Heart left ventricle (tissue), 16 donors: ENCODE measurements at regions of chr9 and their contacts with region 1.

Region 1: GRCh38 chr9:84823421-84824271 is 154.1 kb downstream of the NTRK2 start:
- DNase-seq: peak in 2 of 5 donors; percentile 10 to 18
- ATAC-seq: peak; percentile 55 to 70 (median 60)
- H3K4me3 ChIP-seq: peak overlapping the region in 1 of 12 donors; percentile 9
- H3K27ac ChIP-seq: peak overlapping the region in 2 of 12 donors; percentile 48 to 49
- H3K4me1 ChIP-seq: peaks cover 0 to 32% (median 2%) of the 10 kb centered on the region in 12 donors
- H3K27me3 ChIP-seq: no peaks in the 10 kb centered on the region
- CTCF ChIP-seq: no peak
- POLR2A ChIP-seq: no peak

Region 2: DNA sequence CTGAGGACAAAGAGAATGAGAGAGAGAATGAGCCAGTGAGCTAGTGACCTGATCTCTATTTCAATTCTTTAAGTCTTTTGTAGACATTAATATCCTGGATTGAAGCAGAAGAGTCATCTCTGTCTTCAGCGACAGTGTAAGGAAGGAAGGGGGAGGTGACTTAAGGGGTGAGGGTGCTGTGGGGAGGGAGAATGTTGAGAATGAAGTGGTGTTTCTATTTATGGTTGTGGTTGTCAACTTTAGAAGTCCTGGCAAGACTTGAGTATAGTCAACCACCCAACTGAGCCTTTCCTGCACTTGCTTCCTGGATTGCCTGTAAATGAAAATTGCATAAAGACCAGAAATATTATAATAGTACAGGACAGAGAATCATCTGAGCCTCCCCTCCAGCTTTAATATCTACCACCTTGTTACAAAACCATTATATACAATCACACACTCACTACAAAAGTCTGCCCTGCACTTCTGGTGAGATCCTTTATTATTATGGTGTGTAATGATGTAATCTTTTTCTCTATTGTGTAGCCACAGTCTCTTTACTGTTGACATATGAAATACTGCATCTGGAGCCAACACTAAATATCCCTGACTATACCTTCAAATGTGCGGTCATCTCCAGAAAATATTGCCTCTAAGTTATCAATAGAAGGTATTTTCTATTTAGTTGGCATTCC is 62.4 kb before region 1 on chr9:
- intact Hi-C with region 1: loop called in 1 of 10 experiments (anchors 5 kb)
- DNase-seq: no peak
- ATAC-seq: no peak
- H3K4me3 ChIP-seq: no peak overlapping the region
- H3K27ac ChIP-seq: no peak overlapping the region
- H3K4me1 ChIP-seq: peaks cover 0 to 11% (median 0%) of the 10 kb centered on the region in 12 donors
- H3K27me3 ChIP-seq: no peaks in the 10 kb centered on the region
- CTCF ChIP-seq: no peak
- POLR2A ChIP-seq: no peak

Region 3: DNA sequence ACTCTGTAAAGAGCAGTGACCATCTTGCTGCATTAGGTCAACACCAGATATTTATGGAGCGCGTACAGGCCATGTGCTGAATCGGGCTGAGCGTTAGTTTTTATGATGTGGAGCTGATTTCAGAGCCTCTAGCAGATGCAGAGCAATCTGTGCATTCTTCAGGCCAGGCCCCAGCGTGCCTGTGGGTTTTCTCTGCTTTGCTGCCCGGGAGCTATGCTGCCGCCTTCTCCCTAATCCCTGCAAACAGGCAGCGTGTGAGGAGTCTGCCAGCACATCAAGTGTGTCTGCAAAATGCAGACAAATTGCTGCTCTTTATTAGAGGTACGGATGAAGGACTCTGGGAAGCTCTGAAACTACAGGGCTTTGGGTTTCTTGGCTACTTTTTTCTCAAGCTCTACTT is 15.9 kb after region 1 on chr9:
- intact Hi-C with region 1: no loop called
- DNase-seq: no peak
- ATAC-seq: no peak
- H3K4me3 ChIP-seq: no peak overlapping the region
- H3K27ac ChIP-seq: no peak overlapping the region
- H3K4me1 ChIP-seq: no peaks in the 10 kb centered on the region
- H3K27me3 ChIP-seq: no peaks in the 10 kb centered on the region
- CTCF ChIP-seq: no peak
- POLR2A ChIP-seq: no peak

Region 4: DNA sequence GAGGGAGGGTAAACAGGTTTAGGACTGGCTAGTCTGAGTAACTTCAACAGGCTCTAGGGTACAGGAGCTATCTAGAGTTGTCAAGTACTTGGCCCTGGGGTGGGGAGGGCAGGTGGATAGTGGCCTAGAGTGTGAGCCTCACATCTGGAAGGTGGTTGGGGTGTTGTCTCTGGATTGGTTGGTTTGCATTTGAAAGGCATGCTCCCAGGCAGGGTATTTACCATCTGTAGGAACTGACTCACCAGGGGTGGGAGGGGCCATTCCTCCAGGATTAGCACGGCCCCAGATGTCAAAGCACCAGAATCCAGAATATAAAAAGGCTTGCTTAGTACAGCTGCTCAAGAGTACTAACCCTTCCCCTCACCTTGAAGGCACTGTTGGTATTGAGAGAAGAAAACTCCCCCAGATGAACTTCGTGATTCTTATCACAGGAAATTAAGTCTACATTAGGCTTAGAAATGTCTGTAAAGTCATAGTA is 39.2 kb after region 1 on chr9:
- intact Hi-C with region 1: loop called in 1 of 10 experiments (anchors 5 kb)
- DNase-seq: peak in 3 of 5 donors; percentile 42 to 63 (median 48)
- ATAC-seq: peak in 3 of 4 donors; percentile 63 to 77 (median 74)
- H3K4me3 ChIP-seq: no peak overlapping the region
- H3K27ac ChIP-seq: peak overlapping the region in 1 of 12 donors; percentile 14
- H3K4me1 ChIP-seq: peaks cover 0 to 48% (median 11%) of the 10 kb centered on the region in 12 donors
- H3K27me3 ChIP-seq: no peaks in the 10 kb centered on the region
- CTCF ChIP-seq: no peak
- POLR2A ChIP-seq: no peak